ENCODE measurements at regions of chr12 and their contacts with region 1.

Region 1: DNA sequence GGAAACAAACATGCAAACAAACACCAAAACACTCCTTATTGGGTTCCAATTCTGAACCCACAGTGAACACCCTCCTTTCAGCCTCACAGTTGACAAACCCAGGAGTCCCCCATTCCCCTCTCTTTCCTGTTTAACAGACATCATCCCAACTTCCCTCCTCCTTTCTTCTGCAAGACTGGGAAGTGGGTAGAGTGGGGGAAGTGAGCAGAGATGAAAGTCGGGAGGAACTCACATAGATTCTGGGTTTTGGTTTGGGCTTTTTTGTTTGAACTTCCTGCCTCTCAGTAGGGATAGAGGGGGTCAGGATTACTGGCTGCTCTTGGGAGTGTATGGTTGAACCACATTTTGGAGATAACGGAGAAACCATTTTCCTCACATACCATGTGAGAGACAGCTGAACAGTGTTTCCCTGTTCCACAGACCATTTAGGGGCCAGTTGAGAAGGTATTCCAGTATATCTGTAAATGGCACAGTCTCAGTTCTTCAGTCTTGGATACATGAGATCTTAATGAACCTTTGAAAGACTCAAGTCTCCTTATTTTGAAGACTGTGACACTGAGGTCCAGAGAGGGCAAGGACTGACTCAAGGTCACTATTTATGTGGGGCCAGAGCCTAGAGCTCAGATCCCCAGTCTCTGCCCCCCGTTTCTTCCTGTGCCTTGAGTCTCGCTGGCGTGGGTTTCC is 3.9 kb upstream of the GPR84 start:
- DNase-seq: no peak
- H3K27ac ChIP-seq: peak overlapping the region; percentile 13
- CTCF ChIP-seq: no peak

Region 2: GRCh38 chr12:54082397-54082892 is 285.7 kb before region 1 on chr12:
- CTCF ChIA-PET with region 1: no interaction called
- POLR2A ChIA-PET with region 1: no interaction called
- DNase-seq: no peak
- H3K27ac ChIP-seq: no peak overlapping the region
- CTCF ChIP-seq: no peak

Region 3: GRCh38 chr12:54301428-54302048 is 66.6 kb before region 1 on chr12:
- CTCF ChIA-PET with region 1: interaction called, 10 read pairs
- POLR2A ChIA-PET with region 1: no interaction called
- DNase-seq: no peak
- H3K27ac ChIP-seq: no peak overlapping the region
- CTCF ChIP-seq: no peak